Activated T-helper 1 cell treated with anti-CD3 and anti-CD28 coated beads, Interleukin-12 subunit alpha, Interleukin-12 subunit beta, Interleukin-2, Interleukin-4 antibody, amounts not matched to agents 30 ng/mL and 10 ng/mL and 1 ng/mL, durations not matched to agents 14 hours and 24 hours and 36 hours (primary cell): ENCODE measurements at regions of chr15 and their contacts with region 1.

Region 1: GRCh38 chr15:60362321-60363086 is 35.3 kb downstream of the ANXA2 start:
- DNase-seq: peak; percentile 49
- H3K4me3 Mint-ChIP-seq: peak overlapping the region; percentile 13
- H3K27ac Mint-ChIP-seq: peak overlapping the region; percentile 82
- H3K4me1 Mint-ChIP-seq: peaks cover 36% of the 10 kb centered on the region
- H3K27me3 Mint-ChIP-seq: no peaks in the 10 kb centered on the region

Region 2: GRCh38 chr15:60134609-60135008 is 227.9 kb before region 1 on chr15:
- intact Hi-C with region 1: no loop called
- DNase-seq: no peak
- H3K4me3 Mint-ChIP-seq: no peak overlapping the region
- H3K27ac Mint-ChIP-seq: no peak overlapping the region
- H3K4me1 Mint-ChIP-seq: peaks cover 6% of the 10 kb centered on the region
- H3K27me3 Mint-ChIP-seq: peaks cover 30% of the 10 kb centered on the region

Region 3: DNA sequence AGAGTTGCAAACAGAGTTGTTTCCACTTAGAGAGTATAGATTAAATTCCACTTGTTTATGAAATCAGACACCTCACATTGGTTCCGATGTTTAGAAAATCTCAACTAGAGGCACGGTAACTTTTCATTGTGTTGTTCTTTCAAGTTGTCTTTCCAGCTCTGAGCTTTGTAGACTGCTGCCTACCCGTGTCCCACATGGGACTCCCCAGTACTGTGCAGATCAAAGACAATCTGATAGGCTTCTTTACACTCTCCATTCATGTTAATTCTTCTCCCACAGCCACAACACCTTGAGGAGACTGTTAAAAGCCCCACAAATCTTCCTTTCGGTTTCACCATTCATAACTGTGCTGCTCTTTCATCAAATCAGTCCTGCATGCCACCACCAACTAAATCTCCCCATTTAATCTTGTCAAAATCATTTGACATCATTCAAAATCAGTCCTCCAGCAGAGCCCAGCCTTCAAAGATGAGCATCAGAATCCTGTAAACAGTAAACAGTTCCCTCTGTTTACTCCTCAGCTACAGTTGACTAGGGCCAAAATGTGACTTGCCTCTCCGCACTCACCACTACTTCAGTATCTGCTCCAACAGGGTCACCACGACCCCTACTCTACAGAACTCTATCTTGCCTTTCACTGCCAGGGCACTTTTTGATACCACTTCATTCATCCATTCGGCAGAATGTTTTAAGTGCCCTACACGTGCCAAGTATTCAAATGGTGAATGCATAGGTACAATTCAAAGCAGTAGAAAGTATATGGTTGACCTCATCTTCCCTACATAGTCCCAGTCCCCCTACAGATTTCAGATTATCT is 27.0 kb after region 1 on chr15:
- intact Hi-C with region 1: loop called (anchors 1 kb)
- DNase-seq: peak; percentile 60
- H3K4me3 Mint-ChIP-seq: peak overlapping the region; percentile 34
- H3K27ac Mint-ChIP-seq: peak overlapping the region; percentile 81
- H3K4me1 Mint-ChIP-seq: peaks cover 73% of the 10 kb centered on the region
- H3K27me3 Mint-ChIP-seq: no peaks in the 10 kb centered on the region

Region 4: DNA sequence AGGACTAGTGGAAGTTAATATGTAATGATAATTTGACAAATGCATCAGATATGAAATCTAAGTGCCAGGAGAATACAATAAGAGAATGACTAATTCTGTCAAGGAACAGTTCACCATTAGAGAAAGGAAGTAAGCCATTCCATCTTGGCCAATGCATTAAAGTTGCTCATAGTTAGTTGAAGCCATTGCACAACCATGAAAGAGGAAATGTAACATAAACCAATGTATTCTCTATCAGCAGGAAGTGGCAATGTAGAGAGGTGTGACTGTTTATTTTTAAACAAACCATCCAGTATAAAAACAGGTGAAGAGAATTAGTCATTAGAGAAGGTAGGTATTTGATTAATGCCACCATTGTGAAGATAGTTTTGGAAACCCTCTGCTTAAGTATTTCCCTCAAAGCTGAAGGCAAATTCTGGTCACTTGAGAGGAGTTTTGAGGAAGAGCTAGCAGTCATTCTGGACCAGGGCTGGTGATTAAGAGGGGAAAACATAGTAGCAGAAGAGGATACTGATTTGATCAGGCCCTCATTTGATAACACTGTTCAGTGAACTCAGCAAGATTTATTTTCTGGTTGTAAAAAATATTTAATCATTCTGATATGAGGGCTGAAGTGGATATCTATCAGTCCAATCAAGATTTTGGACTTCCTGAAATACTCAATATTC is 46.1 kb after region 1 on chr15:
- intact Hi-C with region 1: no loop called
- DNase-seq: no peak
- H3K4me3 Mint-ChIP-seq: no peak overlapping the region
- H3K27ac Mint-ChIP-seq: peak overlapping the region; percentile 56
- H3K4me1 Mint-ChIP-seq: peaks cover 14% of the 10 kb centered on the region
- H3K27me3 Mint-ChIP-seq: peaks cover 8% of the 10 kb centered on the region

Region 5: DNA sequence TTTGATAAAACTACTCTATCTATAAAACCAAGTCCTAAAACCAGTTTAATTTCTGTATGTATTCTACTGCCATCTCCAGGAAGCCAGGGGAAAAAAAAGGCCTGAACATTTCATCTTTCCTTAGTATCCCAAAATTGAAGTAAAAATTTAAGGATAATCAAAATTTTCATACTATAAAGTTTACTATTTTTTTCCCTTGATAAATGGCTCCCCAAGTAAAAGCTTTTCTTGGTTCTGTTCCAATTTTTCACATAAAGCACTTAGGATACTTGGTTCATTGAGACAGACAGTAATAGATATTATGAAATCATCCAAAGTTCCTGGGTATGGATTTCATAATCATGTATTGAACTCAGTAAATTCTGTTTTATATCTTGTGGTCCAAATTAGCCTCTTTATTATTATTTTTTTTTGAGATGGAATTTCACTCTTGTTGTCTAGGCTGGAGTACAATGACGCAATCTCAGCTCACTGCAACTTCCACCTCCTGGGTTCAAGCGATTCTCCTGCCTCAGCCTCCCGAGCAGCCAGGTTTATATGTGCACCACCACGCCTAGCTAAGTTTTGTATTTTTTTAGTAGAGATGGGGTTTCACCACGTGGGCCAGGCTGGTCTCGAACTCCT is 81.9 kb after region 1 on chr15:
- intact Hi-C with region 1: loop called (anchors 1 kb)
- DNase-seq: no peak
- H3K4me3 Mint-ChIP-seq: no peak overlapping the region
- H3K27ac Mint-ChIP-seq: no peak overlapping the region
- H3K4me1 Mint-ChIP-seq: no peaks in the 10 kb centered on the region
- H3K27me3 Mint-ChIP-seq: no peaks in the 10 kb centered on the region

Region 6: DNA sequence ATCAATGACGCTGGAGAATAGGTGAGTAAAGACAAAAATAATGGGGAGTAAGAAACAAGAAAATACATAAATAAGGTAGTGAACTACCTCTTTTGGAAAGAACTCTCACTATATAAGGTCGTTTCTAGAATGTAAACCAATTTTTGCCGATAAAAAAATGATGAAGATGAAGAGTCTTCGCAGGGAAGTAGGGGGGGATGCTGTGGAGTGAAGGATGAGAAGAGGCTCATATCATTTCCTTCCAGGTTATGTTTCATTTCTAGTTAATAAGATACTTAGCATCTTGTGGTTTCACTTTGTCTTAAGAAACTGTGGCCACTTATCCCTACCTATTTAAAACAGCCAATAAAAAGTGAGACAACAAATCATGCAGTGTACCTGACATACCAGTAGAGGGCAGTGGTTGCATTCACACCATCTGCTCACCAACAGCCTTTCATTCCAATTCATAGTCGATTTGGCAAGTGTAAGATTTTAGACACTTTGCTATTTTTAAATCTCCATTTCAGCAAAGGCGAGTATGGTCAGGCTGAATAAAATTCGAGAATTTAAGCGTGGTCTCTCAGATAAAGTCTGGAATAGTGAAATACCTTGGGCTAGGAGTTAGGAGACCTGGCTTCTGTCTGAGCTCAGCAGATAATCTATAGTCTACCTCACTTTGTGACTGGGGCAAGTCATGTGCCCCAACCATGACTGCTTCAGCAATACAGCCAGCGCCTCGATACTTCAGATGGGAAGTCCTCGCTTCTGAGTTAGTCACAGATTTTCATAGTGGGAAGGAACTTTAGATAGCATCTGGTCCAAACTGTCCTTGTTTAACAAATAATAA is 145.3 kb after region 1 on chr15:
- intact Hi-C with region 1: loop called (anchors 1 kb)
- DNase-seq: peak; percentile 51
- H3K4me3 Mint-ChIP-seq: no peak overlapping the region
- H3K27ac Mint-ChIP-seq: peak overlapping the region; percentile 65
- H3K4me1 Mint-ChIP-seq: peaks cover 58% of the 10 kb centered on the region
- H3K27me3 Mint-ChIP-seq: no peaks in the 10 kb centered on the region

Region 7: DNA sequence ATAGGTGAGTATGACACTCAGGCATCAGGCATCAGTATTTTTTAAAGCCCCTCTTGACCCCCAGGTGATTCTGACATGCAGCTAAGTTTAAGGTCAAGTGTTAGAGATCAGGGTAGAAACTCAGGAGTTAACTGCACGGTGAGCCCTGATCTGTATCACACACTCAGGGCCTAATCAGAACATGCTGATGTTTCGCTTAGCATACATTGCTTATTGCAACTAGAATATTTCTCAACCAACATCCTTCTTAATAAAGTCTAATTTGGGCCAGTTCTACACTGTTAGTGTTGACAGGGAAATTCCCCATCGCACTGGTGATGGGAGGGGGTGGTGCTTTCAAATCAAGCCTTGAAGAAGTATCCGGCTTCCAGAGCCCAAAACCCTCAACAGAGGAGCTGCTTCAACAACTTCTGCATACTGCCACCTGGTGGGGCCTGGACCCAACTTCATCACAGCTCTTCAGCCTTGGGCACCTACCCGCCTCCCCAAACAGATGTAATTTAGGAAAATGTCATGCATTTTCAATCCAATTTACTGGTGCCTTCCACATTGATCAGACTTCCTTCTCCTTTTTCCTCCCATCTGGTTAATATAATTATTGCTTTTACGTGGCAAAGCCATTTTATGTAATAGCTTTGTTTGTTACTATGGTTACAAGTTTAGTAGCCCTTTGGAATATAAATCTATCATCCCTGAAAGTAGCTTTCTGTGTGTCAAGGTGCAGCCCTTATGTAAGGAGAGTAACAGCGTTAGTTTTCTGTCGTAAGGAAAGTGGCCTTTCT is 554.4 kb after region 1 on chr15:
- intact Hi-C with region 1: loop called (anchors 5 kb)
- DNase-seq: peak; percentile 80
- H3K4me3 Mint-ChIP-seq: peak overlapping the region; percentile 17
- H3K27ac Mint-ChIP-seq: peak overlapping the region; percentile 64
- H3K4me1 Mint-ChIP-seq: peaks cover 32% of the 10 kb centered on the region
- H3K27me3 Mint-ChIP-seq: peaks cover 2% of the 10 kb centered on the region

Region 8: GRCh38 chr15:61834076-61834697 is 1471.7 kb after region 1 on chr15:
- intact Hi-C with region 1: loop called (anchors 1 kb)
- DNase-seq: peak; percentile 59
- H3K4me3 Mint-ChIP-seq: no peak overlapping the region
- H3K27ac Mint-ChIP-seq: no peak overlapping the region
- H3K4me1 Mint-ChIP-seq: peaks cover 7% of the 10 kb centered on the region
- H3K27me3 Mint-ChIP-seq: peaks cover 16% of the 10 kb centered on the region